ENCODE measurements at regions of chr13 and their contacts with region 1.

Region 1: DNA sequence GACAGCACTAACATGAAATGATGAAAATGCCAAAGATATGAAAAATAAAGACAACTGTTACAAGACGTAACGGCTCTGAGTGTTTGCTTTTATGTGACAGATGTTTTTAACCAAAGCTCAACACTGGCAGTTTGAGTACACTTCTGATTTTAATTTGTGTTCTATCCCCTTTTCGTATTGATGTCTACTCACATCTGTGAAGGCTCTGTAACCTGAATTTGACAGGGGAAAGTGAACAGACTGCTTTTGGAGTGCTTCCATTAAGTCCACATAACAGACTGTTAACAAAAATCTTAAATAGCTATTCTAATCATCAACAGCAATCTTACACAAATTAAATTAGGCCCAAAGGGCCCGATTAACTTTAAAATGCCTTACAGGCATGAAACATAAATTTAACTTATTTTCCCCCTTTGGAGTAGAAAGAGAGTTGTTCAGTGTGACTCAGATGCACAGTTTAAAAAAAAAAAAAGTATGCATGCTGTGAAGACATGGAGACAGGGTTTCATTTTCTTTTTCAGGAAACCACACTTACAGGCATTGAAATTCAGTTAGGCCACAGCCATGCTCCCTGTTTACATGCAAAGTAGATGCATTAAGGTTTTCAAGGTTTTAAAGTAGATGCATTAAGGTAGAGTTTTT is 16.3 kb upstream of the RNASEH2B start:
- DNase-seq: peak; percentile 43 to 71 (median 59)
- H3K4me3 ChIP-seq: peak overlapping the region; percentile 42 to 50
- H3K4me3 Mint-ChIP-seq: peak overlapping the region; percentile 69 to 85 (median 82)
- H3K27ac ChIP-seq: peak overlapping the region; percentile 69
- H3K27ac Mint-ChIP-seq: peak overlapping the region; percentile 78 to 97 (median 95)
- H3K4me1 ChIP-seq: peaks cover 45% of the 10 kb centered on the region
- H3K4me1 Mint-ChIP-seq: peaks cover 35 to 46% (median 39%) of the 10 kb centered on the region in 4 donors
- H3K27me3 ChIP-seq: no peaks in the 10 kb centered on the region
- H3K27me3 Mint-ChIP-seq: peaks cover 0 to 2% of the 10 kb centered on the region in 2 donors

Region 2: DNA sequence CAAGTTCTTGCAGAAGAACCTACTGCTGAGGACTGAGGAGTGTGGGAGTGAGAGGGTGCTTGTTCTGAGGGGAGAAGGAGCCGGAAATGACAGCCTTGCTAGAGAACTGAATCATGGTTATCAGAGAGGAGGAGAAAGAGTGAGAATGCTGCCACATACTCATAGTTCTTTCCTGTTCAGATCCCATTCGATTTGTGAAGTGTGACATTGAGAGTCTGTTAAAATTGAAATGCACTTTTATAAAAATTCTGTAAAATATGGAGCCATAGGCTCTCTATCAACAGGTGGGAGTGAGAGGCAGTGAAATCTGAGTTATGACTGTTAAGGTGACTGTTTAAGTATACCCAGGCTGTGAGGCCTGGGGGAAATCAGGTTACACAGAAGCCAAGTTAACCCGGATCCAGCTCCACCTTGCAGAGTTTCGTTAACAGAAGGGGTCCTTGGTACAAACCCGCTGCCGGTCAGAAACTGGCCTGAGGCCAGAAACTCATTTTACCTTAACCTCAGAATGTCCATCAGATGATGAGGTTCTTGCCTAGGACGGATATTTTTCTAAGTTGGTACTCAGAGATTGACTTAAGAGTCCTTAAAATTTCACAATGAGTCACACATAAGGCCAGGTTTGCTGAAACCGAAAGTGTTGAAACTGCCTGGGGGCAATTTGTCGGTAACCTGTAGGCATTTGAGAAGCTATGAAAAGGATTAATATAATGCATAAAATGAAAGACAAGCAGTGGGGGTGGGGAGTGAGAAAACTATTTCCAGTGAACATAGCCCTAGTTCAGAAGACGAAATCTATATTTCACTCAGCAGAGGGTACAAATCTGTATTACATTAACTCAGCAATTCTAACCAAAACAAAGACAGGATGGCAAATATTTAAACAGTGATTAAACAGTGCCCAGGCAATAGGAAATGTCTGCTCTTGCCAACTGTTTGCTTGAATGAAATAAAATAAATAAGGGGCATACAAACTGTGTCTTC is 527.6 kb before region 1 on chr13:
- CTCF ChIA-PET with region 1: no interaction called
- POLR2A ChIA-PET with region 1: interaction called, 5 read pairs
- intact Hi-C with region 1: loop called (anchors 5 kb)
- DNase-seq: peak; percentile 49 to 69 (median 57)
- H3K4me3 ChIP-seq: peak overlapping the region; percentile 36 to 37
- H3K4me3 Mint-ChIP-seq: peak overlapping the region; percentile 77 to 87 (median 83)
- H3K27ac ChIP-seq: peak overlapping the region; percentile 68
- H3K27ac Mint-ChIP-seq: peak overlapping the region; percentile 93 to 97 (median 96)
- H3K4me1 ChIP-seq: peaks cover 43% of the 10 kb centered on the region
- H3K4me1 Mint-ChIP-seq: peaks cover 49 to 61% (median 55%) of the 10 kb centered on the region in 4 donors
- H3K27me3 ChIP-seq: no peaks in the 10 kb centered on the region
- H3K27me3 Mint-ChIP-seq: peaks cover 0 to 2% of the 10 kb centered on the region in 2 donors

Region 3: GRCh38 chr13:51101636-51102235 is 208.4 kb after region 1 on chr13:
- CTCF ChIA-PET with region 1: no interaction called
- POLR2A ChIA-PET with region 1: no interaction called
- intact Hi-C with region 1: no loop called
- DNase-seq: no peak
- H3K4me3 ChIP-seq: no peak overlapping the region
- H3K4me3 Mint-ChIP-seq: no peak overlapping the region
- H3K27ac ChIP-seq: no peak overlapping the region
- H3K27ac Mint-ChIP-seq: no peak overlapping the region
- H3K4me1 ChIP-seq: no peaks in the 10 kb centered on the region
- H3K4me1 Mint-ChIP-seq: no peaks in the 10 kb centered on the region
- H3K27me3 ChIP-seq: no peaks in the 10 kb centered on the region
- H3K27me3 Mint-ChIP-seq: peaks cover 19 to 32% of the 10 kb centered on the region in 2 donors

Region 4: DNA sequence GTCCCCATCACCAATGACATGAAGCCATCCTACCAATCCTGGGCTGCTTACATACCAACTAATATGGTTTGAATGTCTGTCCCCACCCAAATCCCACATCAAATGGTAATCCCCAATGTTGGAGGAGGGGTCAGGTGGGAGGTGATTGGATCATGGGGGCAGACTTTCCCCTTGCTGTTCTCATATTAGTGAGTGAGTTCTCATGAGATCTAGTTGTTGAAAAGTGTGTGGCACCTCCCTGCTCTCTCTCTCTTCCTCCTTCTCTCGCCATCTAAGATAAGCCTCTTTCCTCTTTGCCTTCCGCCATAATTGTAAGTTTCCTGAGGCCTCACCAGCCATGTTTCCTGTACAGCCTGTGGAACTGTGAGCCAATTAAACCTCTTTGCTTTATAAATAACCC is 275.3 kb after region 1 on chr13:
- CTCF ChIA-PET with region 1: no interaction called
- POLR2A ChIA-PET with region 1: no interaction called
- intact Hi-C with region 1: no loop called
- DNase-seq: no peak
- H3K4me3 ChIP-seq: no peak overlapping the region
- H3K4me3 Mint-ChIP-seq: no peak overlapping the region
- H3K27ac ChIP-seq: no peak overlapping the region
- H3K27ac Mint-ChIP-seq: no peak overlapping the region
- H3K4me1 ChIP-seq: no peaks in the 10 kb centered on the region
- H3K4me1 Mint-ChIP-seq: no peaks in the 10 kb centered on the region
- H3K27me3 ChIP-seq: no peaks in the 10 kb centered on the region
- H3K27me3 Mint-ChIP-seq: peaks cover 15 to 24% of the 10 kb centered on the region in 2 donors